GM12878 (cell line): ENCODE measurements at regions of chr5 and their contacts with region 1.

Region 1: GRCh38 chr5:39015743-39016586 is 58.2 kb downstream of the RICTOR start:
- DNase-seq: no peak
- ATAC-seq: 0 out of 3 replicates have a peak, but pooled peaks have one; percentile 25
- H3K4me3 ChIP-seq: no peak overlapping the region
- H3K27ac ChIP-seq: no peak overlapping the region
- H3K4me1 ChIP-seq: no peaks in the 10 kb centered on the region
- H3K27me3 ChIP-seq: no peaks in the 10 kb centered on the region
- CTCF ChIP-seq: no peak
- EP300 ChIP-seq: no peak
- POLR2A ChIP-seq: no peak
- RAD21 ChIP-seq: no peak

Region 2: DNA sequence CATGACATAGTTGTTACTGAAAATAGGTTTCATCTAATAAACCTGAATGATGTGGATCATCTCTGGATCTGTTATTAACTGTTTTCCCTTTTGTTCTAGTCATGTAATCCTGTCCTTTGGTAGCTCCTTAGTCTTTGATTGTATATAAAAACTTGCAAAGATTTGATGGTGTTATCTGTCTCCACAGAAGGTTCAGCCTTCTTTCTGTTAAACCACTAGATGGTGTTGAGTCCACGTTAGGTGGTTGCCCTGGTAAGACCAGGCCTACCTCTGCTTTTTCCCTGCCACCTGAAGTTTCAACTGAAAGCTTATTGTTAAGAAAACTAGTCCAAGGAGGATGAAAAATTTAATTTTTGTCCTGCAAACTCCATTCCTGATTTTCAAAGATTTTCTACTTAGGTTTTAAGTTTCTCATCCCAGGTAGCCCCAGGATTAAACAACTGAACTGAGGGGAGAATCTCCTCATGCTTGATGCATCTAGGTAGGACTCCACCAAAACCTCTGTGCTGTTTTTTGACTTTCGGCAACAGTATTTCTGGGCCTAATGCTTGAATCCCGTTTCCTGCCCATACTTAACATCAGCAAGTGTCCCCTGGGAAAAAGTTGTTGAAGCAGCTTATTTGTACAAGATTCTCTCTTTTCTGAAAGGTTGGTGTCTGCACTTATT is 10.3 kb before region 1 on chr5:
- CTCF ChIA-PET with region 1: interaction called, 5 read pairs
- POLR2A ChIA-PET with region 1: no interaction called
- RAD21 ChIA-PET with region 1: no interaction called
- SMC1A ChIA-PET with region 1: interaction called, 11 read pairs
- in situ Hi-C with region 1: no loop called
- intact Hi-C with region 1: no loop called
- DNase-seq: no peak
- ATAC-seq: peak; percentile 76
- H3K4me3 ChIP-seq: no peak overlapping the region
- H3K27ac ChIP-seq: no peak overlapping the region
- H3K4me1 ChIP-seq: no peaks in the 10 kb centered on the region
- H3K27me3 ChIP-seq: no peaks in the 10 kb centered on the region
- CTCF ChIP-seq: peak; percentile 34 to 45 (median 40); a peak in 3 of 6 replicates
- EP300 ChIP-seq: no peak
- POLR2A ChIP-seq: no peak
- RAD21 ChIP-seq: peak; percentile 40; the same call in 1 of the 2 replicates

Region 3: DNA sequence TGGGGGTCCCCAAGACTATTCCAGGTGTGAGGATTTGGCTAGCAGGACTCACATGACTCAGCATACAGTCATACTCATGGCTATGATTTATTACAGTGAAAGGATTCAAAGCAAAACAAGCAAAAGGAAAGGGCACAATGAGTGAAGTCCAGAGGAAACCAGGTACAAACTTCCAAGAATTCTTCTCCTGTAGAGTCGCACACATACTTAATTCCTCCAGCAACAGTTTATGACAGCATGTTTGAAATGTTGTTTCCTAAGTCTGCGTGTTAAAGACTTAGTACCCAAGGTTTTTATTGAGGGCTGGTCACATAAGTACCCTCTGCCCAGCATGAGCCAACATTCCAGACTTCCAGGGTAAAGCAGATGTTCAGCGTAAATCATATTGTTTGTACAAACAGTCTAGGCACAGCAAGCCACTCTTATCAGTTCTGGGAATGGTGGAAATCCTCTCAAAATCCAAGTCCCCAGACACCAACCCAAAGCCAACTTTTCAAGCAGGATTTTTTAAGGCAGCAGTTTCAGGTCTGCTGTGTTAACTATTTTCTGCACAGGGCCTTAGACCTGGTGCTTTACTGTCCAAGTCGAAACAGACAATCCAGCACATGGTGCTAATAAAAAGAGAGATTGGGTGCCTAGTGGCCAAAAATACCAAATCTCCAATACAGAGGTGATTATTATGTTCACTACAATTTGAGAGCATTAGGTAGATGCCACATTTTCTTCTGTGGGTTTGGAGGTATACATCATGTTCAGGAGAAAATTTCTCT is 76.8 kb after region 1 on chr5:
- CTCF ChIA-PET with region 1: no interaction called
- POLR2A ChIA-PET with region 1: no interaction called
- RAD21 ChIA-PET with region 1: no interaction called
- SMC1A ChIA-PET with region 1: no interaction called
- in situ Hi-C with region 1: no loop called
- intact Hi-C with region 1: no loop called
- DNase-seq: no peak
- ATAC-seq: no peak
- H3K4me3 ChIP-seq: no peak overlapping the region
- H3K27ac ChIP-seq: no peak overlapping the region
- H3K4me1 ChIP-seq: no peaks in the 10 kb centered on the region
- H3K27me3 ChIP-seq: no peaks in the 10 kb centered on the region
- CTCF ChIP-seq: no peak
- EP300 ChIP-seq: no peak
- POLR2A ChIP-seq: no peak
- RAD21 ChIP-seq: no peak